ENCODE measurements at regions of chr2 and their contacts with region 1.

Region 1: DNA sequence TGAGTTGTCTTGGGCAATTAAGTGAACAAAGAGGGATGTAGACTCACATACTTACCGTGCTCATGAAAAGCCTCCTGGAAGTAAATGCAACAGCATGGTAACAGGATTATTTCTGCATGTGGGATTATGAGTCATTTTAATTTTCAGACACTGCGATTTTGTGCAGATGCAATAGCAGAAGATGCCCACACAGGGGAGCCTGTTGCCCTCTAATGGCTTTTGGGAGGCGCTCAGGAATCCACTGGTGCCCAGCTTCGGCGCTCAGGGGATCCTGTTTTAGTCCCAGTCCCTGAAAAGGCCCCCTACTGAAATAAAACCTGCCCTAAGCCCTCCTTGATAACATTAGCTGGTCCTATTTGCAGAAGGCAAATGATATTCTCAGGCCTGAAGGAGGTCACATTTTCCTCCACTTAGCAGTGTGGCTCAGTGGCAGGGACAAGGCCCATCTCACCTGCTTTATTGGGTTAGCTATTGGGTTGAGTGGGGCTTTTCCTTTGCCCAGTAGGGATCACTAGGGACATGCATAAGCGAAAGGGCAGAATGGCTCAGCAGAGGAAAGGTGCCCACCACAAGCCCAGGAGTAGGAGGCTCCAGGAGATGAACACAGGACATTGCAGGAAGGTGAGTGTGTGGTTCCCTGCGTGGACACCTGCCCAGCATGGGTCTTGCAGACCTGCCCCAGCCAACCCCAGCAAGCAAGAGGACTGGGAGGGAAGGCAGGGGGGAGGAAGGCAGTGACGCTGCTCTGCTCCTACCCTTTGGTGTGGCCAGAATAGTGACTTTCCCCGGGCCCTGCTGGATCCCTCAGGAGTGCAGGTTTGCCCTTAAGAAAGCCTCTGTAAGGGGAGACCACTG is 26.5 kb upstream of the KCNS3 start:
- DNase-seq: peak; percentile 75 to 82
- H3K4me3 ChIP-seq: no peak overlapping the region
- H3K4me1 ChIP-seq: no peaks in the 10 kb centered on the region
- H3K27me3 ChIP-seq: no peaks in the 10 kb centered on the region; the same call in 1 of the 2 replicates

Region 2: DNA sequence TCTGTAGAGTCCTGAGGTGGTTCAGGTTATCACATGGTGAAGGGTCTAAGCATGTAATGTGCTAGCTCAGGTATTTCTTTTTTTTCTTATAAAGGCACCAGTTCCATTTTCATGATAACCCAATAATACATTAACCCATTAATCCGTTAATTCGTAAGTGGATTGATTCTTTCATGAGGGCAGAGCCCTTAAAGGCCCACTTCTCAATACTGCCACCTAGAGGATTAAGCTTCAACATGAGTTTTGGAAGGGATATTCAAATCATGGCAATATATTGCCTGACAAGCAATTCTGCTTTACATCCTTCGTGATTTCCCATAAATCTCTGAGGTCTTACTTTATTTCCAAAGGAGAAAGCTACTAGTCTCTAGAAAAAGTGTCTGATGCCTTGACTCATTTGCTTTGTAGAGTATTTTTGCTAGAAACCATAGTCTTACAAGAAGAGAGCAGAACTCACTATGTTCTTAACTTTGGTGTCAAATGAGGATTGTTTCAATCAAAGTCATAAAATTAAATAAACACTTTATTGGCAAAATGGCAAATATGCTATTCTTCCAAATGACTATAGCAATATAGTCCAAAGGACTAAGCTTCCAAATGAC is 297.8 kb after region 1 on chr2:
- in situ Hi-C with region 1: loop called (anchors 25 kb)
- DNase-seq: peak in 1 of 2 experiments; percentile 66
- H3K4me3 ChIP-seq: no peak overlapping the region
- H3K4me1 ChIP-seq: no peaks in the 10 kb centered on the region
- H3K27me3 ChIP-seq: no peaks in the 10 kb centered on the region

Region 3: DNA sequence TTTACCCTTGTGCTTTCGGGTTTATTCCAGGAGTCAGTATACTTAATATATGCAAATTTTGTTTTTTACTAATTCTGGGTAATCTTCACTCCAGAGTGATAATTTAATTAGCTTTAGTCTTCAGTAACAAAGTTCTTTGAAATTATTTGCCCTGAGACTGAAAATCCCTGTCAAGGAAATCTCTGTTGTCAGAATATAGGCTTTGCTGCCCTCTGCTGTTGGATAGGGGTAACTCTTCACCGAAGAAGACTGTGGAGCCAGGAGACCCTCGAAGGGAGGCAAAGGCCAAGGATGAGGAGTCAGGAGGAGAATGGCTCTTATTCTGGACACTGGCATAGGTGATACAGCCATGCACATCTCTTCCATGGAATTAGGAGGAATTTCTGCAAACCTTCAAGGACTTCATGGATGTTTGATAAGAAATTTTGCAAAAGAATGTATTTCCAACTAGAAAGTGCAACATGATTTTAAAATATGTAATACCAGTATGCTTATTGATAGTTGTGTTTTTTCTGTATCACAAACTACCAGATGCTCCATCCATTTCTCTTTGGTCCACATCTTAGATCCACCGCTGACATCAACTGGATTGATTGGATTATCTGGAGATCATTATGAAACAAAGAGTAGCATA is 526.2 kb after region 1 on chr2:
- in situ Hi-C with region 1: loop called (anchors 5 kb)
- DNase-seq: peak; percentile 70 to 72
- H3K4me3 ChIP-seq: no peak overlapping the region
- H3K4me1 ChIP-seq: peaks cover 6% of the 10 kb centered on the region
- H3K27me3 ChIP-seq: no peaks in the 10 kb centered on the region